Tibial artery (tissue), 4 donors: ENCODE measurements at regions of chr3 and their contacts with region 1.

Region 1: DNA sequence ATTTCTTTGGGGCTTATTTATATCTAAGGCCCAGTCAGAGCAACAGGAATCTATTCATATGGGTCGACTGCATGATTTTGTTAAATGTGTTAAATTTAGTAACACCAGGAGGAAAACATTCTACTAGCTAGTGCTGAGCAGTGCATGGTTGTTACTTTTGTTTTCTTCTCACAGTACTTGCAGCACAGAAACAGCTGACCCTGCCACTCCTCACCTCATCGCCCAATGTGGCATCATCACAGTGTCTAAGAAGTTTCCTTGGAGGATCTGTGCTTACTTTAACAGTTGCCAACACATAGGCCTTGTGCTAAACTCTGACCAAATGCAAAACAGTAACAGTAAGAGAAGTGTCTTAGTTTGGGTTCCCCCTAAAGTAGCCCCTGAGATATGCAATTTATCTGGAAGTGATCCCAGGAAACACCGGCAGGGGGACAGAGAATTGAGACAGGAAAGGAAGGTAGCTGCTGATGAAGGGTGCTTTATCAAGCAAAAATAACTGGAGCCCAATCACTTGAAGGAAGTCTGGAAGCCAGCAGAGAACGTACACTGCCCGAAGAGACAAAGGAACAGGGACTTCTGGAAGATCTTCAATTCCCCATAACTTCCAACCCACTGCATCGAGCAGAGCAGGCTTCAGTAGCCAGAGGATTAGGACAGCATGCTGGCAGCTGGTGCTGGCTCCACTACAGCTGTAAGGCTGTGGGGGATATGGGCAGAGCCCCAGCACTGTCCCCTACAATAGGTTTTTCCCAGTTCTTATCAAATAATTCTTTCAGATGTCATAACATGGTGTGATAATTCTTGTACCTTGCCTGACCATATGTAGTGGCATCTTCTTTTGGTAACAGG is 36.0 kb upstream of the ULK4 start:
- DNase-seq: no peak
- H3K4me3 ChIP-seq: no peak overlapping the region
- H3K27ac ChIP-seq: peak overlapping the region; percentile 39 to 58
- H3K4me1 ChIP-seq: peaks cover 0 to 26% (median 10%) of the 10 kb centered on the region in 4 donors
- H3K27me3 ChIP-seq: no peaks in the 10 kb centered on the region
- CTCF ChIP-seq: peak; percentile 21 to 42

Region 2: DNA sequence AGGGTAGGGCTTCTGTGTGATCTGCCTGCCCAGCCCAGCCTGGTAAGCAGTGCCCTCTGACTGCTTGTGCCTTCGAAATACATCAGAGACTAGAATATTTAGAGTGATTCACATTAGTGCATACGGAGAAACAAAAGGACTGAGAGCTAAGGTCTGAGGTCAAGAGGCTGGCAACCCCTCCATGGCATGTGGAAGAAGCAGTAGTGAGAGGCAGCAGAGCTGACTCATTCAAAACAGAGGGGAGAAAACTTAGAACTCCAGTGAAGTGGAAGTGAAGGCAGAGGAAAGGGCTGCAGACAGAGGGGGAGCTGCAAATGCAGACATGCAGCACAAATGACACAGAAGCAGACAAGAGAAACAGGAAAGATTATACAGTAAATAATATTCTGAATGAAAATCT is 97.7 kb before region 1 on chr3:
- intact Hi-C with region 1: loop called (anchors 10 kb)
- DNase-seq: no peak
- H3K4me3 ChIP-seq: no peak overlapping the region
- H3K27ac ChIP-seq: no peak overlapping the region
- H3K4me1 ChIP-seq: no peaks in the 10 kb centered on the region
- H3K27me3 ChIP-seq: no peaks in the 10 kb centered on the region
- CTCF ChIP-seq: no peak